Activated CD8-positive, alpha-beta T cell treated with anti-CD3 and anti-CD28 coated beads, Interleukin-2, amount 10 ng/mL, durations not matched to agents 7 days and 5 days (primary cell): ENCODE measurements at regions of chr2 and their contacts with region 1.

Region 1: DNA sequence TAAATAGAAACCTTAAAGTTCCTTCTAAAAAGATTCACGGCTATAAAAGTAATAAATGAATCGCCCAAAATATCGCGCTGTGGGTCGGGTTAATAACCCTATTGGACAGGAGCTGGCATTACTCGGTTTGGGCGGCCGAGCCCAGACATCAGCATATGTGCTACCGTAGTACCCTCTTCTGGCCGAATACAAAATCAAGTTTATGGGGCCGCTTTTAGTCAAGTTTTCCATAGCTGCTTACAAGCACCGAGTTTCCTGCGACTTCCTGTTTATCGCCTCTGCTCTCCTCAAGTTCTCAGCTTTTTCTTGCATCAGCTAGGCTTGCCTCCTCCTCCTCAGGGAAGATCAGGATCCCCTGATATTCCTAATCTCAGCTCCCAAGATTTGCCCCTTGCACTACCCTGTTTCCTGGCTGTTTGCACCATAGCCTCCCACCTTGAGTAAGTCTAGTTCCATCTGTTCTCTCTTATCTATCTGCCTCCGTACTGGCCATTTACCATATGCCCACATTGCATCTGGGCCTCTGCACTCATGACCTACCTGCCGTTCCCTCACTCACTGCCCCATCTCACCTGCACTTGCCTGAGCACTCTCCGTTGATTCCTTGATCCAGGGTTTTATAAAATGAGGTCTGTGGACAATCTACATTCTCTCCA is 56.1 kb downstream of the SLC35F5 start:
- DNase-seq: peak; percentile 79
- ATAC-seq: peak; percentile 97
- H3K4me3 Mint-ChIP-seq: peak overlapping the region; percentile 70
- H3K27ac Mint-ChIP-seq: peak overlapping the region; percentile 82
- H3K4me1 Mint-ChIP-seq: peaks cover 22% of the 10 kb centered on the region
- H3K27me3 Mint-ChIP-seq: no peaks in the 10 kb centered on the region

Region 2: GRCh38 chr2:113602869-113603466 is 97.3 kb before region 1 on chr2:
- CTCF ChIA-PET with region 1: interaction called, 32 read pairs
- POLR2A ChIA-PET with region 1: no interaction called
- DNase-seq: no peak
- ATAC-seq: peak; percentile 65
- H3K4me3 Mint-ChIP-seq: peak overlapping the region; percentile 92
- H3K27ac Mint-ChIP-seq: peak overlapping the region; percentile 98
- H3K4me1 Mint-ChIP-seq: peaks cover 10% of the 10 kb centered on the region
- H3K27me3 Mint-ChIP-seq: no peaks in the 10 kb centered on the region

Region 3: DNA sequence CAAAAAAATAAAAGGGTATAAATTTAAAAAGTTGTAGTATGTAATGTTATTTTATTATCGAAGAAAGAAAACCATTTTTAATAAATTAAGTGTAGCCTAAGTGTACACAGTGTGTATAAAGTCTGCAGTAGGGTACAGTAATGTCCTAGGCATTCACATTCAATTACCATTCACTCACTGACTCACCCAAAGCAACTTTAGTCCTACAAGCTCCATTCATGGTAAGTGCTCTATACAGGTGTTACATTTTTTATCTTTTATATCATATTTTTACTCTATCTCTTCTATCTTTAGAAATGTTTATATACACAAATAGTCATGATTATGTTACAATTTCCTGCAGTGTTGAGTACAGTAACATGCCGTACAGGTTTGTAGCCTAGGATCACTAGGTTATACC is 13.8 kb before region 1 on chr2:
- CTCF ChIA-PET with region 1: interaction called, 14 read pairs
- POLR2A ChIA-PET with region 1: interaction called, 3 read pairs
- DNase-seq: no peak
- ATAC-seq: no peak
- H3K4me3 Mint-ChIP-seq: no peak overlapping the region
- H3K27ac Mint-ChIP-seq: no peak overlapping the region
- H3K4me1 Mint-ChIP-seq: peaks cover 10% of the 10 kb centered on the region
- H3K27me3 Mint-ChIP-seq: no peaks in the 10 kb centered on the region

Region 4: GRCh38 chr2:113716291-113716690 is 16.0 kb after region 1 on chr2:
- CTCF ChIA-PET with region 1: interaction called, 16 read pairs
- POLR2A ChIA-PET with region 1: no interaction called
- DNase-seq: no peak
- ATAC-seq: no peak
- H3K4me3 Mint-ChIP-seq: no peak overlapping the region
- H3K27ac Mint-ChIP-seq: no peak overlapping the region
- H3K4me1 Mint-ChIP-seq: no peaks in the 10 kb centered on the region
- H3K27me3 Mint-ChIP-seq: no peaks in the 10 kb centered on the region

Region 5: GRCh38 chr2:113756355-113757137 is 56.2 kb after region 1 on chr2 and contains the start of gene SLC35F5:
- CTCF ChIA-PET with region 1: interaction called, 3 read pairs
- POLR2A ChIA-PET with region 1: interaction called, 10 read pairs
- DNase-seq: peak; percentile 92
- ATAC-seq: peak; percentile 89
- H3K4me3 Mint-ChIP-seq: peak within 1 kb of the TSS; percentile 93
- H3K27ac Mint-ChIP-seq: peak within 1 kb of the TSS; percentile 99
- H3K4me1 Mint-ChIP-seq: peaks cover 28% of the 10 kb centered on the region
- H3K27me3 Mint-ChIP-seq: peaks cover 2% of the 10 kb centered on the region
- total RNA-seq, gene SLC35F5: 16.5 to 17.1 TPM